Naive thymus-derived CD4-positive, alpha-beta T cell (primary cell): ENCODE measurements at regions of chr5 and their contacts with region 1.

Region 1: DNA sequence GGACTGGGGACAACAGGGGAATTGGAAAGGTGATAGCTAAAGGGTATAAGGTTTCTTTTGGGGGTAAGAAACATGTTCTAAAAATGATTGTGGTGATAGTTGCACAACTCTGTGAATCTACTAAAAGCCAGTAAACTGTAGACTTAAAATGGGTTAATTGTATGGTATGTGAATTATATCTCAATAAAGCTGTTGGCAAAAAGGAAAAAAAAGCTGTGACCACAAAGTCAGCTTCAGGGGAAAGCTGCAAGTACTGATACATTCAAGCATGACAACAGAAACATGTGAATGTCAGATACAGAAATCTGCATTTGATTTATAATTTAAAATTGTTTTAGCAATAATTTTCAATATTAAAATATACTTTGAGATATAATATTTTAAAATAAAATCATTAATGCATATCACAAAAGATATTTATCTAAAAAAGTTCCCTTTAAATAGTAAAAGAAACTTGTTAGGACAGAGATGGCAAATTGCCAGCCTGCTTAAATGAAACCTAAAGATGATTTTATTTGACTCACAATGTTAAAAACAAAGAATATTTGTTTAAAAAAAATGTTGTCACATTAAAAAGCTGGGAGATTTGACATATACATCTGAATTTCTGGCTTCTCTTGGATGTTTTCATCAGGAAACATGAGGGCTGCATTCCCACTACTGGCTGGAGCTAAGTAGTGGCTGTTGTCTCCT is 66.0 kb downstream of the TBCA start:
- DNase-seq: no peak
- ATAC-seq: no peak
- H3K4me3 ChIP-seq: no peak overlapping the region
- H3K4me3 Mint-ChIP-seq: no peak overlapping the region
- H3K27ac ChIP-seq: no peak overlapping the region
- H3K27ac Mint-ChIP-seq: no peak overlapping the region
- H3K4me1 ChIP-seq: peaks cover 0 to 4% of the 10 kb centered on the region in 2 donors
- H3K4me1 Mint-ChIP-seq: peaks cover 0 to 14% (median 7%) of the 10 kb centered on the region in 7 donors
- H3K27me3 ChIP-seq: no peaks in the 10 kb centered on the region
- H3K27me3 Mint-ChIP-seq: no peaks in the 10 kb centered on the region

Region 2: GRCh38 chr5:77725616-77726015 is 15.5 kb after region 1 on chr5:
- CTCF ChIA-PET with region 1: no interaction called
- POLR2A ChIA-PET with region 1: no interaction called
- intact Hi-C with region 1: loop called in 1 of 2 experiments (anchors 2 kb)
- DNase-seq: no peak
- ATAC-seq: no peak
- H3K4me3 ChIP-seq: no peak overlapping the region
- H3K4me3 Mint-ChIP-seq: no peak overlapping the region
- H3K27ac ChIP-seq: no peak overlapping the region
- H3K27ac Mint-ChIP-seq: no peak overlapping the region
- H3K4me1 ChIP-seq: no peaks in the 10 kb centered on the region
- H3K4me1 Mint-ChIP-seq: peaks cover 2 to 59% (median 36%) of the 10 kb centered on the region in 7 donors
- H3K27me3 ChIP-seq: no peaks in the 10 kb centered on the region
- H3K27me3 Mint-ChIP-seq: no peaks in the 10 kb centered on the region